AG04449 (cell line): ENCODE measurements at regions of chr2 and their contacts with region 1.

Region 1: DNA sequence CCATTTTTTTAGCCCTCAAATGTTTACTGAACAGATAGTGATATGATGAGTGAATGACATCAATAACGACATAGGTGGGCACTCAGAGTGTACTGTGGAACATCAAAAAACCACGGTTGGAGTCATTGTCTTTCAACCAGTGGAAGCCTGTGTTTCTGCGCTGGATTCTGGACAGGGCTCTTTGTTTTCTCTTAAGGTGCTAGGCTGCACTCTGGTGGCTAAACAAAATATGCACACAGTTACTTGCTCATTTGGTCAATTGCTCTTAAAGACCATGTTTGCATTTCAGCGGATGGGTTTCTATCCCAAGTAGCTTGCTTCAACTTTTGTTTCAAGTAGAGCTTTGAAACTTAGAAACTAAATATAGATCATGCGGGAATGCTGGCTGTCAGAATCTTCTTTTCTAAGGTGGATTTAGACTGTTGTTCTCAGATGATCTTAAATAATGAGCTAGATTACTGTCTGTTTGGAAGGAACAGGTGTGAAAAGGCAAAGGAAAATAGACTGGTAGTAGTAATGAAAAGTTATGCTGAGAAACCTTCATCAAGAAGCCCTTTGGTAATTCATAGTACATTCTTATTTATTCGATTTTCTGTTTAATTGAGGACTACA is 48.5 kb upstream of the LYPD6B start:
- DNase-seq: peak; percentile 45
- H3K4me3 ChIP-seq: no peak overlapping the region
- CTCF ChIP-seq: peak; percentile 52

Region 2: DNA sequence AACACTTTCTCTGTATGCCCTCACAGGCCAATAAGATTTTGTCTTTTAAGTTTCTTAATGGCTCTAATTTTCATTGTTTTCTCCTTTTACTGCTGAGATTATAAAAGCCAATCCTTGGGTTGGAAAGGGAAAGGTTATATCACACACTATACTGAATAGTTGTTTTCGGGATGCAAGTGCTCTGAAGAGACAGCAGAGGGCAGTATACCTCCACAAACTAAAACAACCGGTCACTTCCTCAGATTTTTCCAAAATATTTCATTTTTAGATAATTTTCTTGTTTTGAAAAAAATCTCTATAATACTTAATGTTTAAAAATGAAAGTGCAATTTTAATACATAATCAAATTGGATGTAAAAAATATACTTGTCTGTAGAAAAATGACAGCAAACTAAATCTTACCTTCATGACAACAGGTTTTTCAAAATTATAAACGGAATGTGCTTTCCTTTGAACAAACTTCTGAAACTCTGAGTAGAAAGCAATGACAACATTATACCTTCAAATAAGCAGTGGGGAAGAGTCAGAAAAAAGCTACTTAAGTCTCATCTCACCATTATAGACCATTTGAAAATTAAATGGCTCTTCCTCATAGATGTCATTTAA is 1052.1 kb before region 1 on chr2:
- CTCF ChIA-PET with region 1: interaction called, 11 read pairs
- POLR2A ChIA-PET with region 1: no interaction called
- DNase-seq: no peak
- H3K4me3 ChIP-seq: no peak overlapping the region
- CTCF ChIP-seq: peak; percentile 67

Region 3: GRCh38 chr2:147989809-147990403 is 1000.1 kb before region 1 on chr2:
- CTCF ChIA-PET with region 1: interaction called, 13 read pairs
- POLR2A ChIA-PET with region 1: no interaction called
- DNase-seq: peak; percentile 17
- H3K4me3 ChIP-seq: no peak overlapping the region
- CTCF ChIP-seq: peak; percentile 39

Region 4: DNA sequence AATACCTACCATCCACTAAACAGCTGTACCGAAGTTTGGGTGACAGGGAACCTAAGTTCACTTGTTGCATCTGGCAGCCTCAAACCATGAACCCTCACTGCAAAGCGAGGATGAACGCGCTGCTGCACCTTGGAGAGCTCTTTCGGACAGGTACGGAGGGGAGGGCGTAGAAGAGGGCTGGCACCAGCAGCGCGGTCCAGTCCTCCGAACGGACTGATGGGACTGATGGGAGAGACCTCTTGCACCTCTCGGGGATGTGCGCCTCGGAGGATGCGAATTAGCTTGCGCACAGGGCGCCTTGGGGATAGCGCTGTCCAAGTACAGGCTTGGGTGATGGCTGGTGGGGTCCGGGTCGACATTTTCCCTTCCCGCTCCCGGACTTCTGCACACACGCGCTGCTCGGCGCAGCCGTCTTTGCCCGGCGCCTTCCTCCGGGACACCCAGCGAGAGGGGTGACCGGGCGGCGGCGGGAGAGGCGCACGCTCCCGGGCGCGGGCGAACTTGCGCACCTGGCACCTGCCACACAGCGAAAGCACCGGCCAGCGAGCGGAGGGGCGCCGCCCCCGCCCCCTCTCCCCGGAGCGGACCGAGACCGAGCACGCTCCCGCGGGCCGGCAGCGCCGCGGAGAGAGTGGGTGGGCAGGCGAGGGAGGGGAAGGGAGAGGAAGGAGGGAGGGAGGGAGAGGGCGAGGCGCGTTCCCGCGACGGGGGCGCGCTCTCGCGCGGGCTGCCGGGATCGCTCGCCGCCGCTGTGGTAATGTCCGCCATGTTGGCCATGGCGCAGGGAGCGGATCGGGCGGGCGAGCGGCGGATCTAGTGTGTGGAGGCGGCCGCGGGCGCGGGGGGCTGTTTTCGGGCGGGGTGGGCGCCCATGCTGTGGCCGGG is 345.7 kb before region 1 on chr2 and contains the start of gene EPC2:
- CTCF ChIA-PET with region 1: interaction called, 87 read pairs
- POLR2A ChIA-PET with region 1: interaction called, 3 read pairs
- DNase-seq: no peak
- H3K4me3 ChIP-seq: peak within 1 kb of the TSS; percentile 94
- CTCF ChIP-seq: no peak